Mammary epithelial cell (primary cell): ENCODE measurements at regions of chr22 and their contacts with region 1.

Region 1: DNA sequence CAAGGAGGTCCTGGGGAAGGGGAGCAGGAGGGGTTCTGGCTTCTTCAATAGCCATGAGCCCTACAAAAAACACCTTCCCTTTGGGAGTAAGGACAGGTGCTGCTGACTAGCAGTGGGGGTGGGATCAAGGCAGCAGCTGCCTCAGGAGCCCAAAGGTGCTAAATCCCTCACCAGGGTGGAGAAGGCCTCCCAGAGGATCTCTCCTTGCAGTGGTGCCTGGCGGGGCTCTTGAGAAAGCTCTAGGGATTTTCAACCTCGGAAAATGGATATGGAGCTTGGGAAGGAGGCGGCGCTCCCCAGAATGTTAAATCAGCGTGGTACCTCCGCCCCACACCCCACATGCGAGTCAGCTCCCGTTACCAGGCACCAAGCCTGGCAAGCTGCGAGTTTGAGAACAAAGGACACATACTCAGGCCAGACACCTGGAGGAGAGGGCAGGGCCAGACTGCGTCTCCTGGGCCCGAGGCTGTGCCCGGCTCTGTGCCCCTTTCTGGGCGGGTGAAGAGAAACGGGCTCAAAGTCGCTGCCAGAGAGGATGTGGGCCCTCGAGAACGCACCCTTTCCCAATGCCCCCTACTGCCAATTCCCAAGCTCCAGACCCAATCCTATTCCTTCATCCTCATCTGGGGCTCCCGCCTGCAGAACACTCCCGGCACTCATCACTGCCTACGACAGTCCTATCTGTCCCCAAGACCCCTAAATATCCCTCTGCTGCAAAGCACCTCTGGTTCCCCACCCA is 139.0 kb downstream of the BRD1 start:
- DNase-seq: no peak
- H3K4me3 ChIP-seq: no peak overlapping the region
- H3K27ac ChIP-seq: no peak overlapping the region
- H3K4me1 ChIP-seq: no peaks in the 10 kb centered on the region
- H3K27me3 ChIP-seq: no peaks in the 10 kb centered on the region
- CTCF ChIP-seq: no peak

Region 2: GRCh38 chr22:49671331-49672013 is 17.2 kb before region 1 on chr22:
- CTCF ChIA-PET with region 1: no interaction called
- dilution Hi-C with region 1: no loop called
- in situ Hi-C with region 1: no loop called
- intact Hi-C with region 1: no loop called
- DNase-seq: no peak
- H3K4me3 ChIP-seq: no peak overlapping the region
- H3K27ac ChIP-seq: no peak overlapping the region
- H3K4me1 ChIP-seq: no peaks in the 10 kb centered on the region
- H3K27me3 ChIP-seq: peaks cover 2% of the 10 kb centered on the region
- CTCF ChIP-seq: no peak

Region 3: GRCh38 chr22:49749885-49750772 is 61.4 kb after region 1 on chr22:
- CTCF ChIA-PET with region 1: no interaction called
- dilution Hi-C with region 1: loop called (anchors 10 kb)
- in situ Hi-C with region 1: no loop called
- intact Hi-C with region 1: no loop called
- DNase-seq: no peak
- H3K4me3 ChIP-seq: no peak overlapping the region
- H3K27ac ChIP-seq: no peak overlapping the region
- H3K4me1 ChIP-seq: no peaks in the 10 kb centered on the region
- H3K27me3 ChIP-seq: no peaks in the 10 kb centered on the region
- CTCF ChIP-seq: no peak